ENCODE measurements at regions of chr2 and their contacts with region 1.

Region 1: DNA sequence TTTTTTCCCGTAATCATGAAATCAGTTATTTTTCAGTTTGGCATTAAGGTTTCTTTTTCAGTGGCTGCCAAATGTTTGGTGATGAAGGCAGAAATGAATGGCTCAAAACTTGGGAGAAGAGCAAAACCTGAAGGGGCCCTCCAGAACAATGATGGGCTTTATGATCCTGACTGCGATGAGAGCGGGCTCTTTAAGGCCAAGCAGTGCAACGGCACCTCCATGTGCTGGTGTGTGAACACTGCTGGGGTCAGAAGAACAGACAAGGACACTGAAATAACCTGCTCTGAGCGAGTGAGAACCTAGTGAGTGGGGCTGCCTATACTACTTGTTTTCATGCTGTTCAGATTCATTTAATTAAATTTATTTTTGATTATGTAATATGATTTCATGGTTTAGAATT is 29.2 kb upstream of the MSH2 start:
- DNase-seq: peak; percentile 47
- H3K4me3 Mint-ChIP-seq: peak overlapping the region; percentile 29
- H3K27ac Mint-ChIP-seq: no peak overlapping the region
- H3K4me1 Mint-ChIP-seq: peaks cover 7% of the 10 kb centered on the region
- H3K27me3 Mint-ChIP-seq: no peaks in the 10 kb centered on the region
- CTCF ChIP-seq: no peak

Region 2: GRCh38 chr2:47334356-47335136 is 39.2 kb before region 1 on chr2:
- CTCF ChIA-PET with region 1: interaction called, 20 read pairs
- intact Hi-C with region 1: loop called (anchors 1 kb)
- DNase-seq: no peak
- H3K4me3 Mint-ChIP-seq: no peak overlapping the region
- H3K27ac Mint-ChIP-seq: no peak overlapping the region
- H3K4me1 Mint-ChIP-seq: peaks cover 15% of the 10 kb centered on the region
- H3K27me3 Mint-ChIP-seq: no peaks in the 10 kb centered on the region
- CTCF ChIP-seq: no peak

Region 3: GRCh38 chr2:47339745-47340541 is 33.8 kb before region 1 on chr2:
- CTCF ChIA-PET with region 1: interaction called, 20 read pairs
- intact Hi-C with region 1: loop called (anchors 1 kb)
- DNase-seq: peak; percentile 84
- H3K4me3 Mint-ChIP-seq: peak overlapping the region; percentile 55
- H3K27ac Mint-ChIP-seq: peak overlapping the region; percentile 94
- H3K4me1 Mint-ChIP-seq: peaks cover 49% of the 10 kb centered on the region
- H3K27me3 Mint-ChIP-seq: no peaks in the 10 kb centered on the region
- CTCF ChIP-seq: no peak

Region 4: GRCh38 chr2:47344890-47345589 is 28.7 kb before region 1 on chr2:
- CTCF ChIA-PET with region 1: interaction called, 7 read pairs
- intact Hi-C with region 1: loop called (anchors 1 kb)
- DNase-seq: peak; percentile 96
- H3K4me3 Mint-ChIP-seq: peak overlapping the region; percentile 81
- H3K27ac Mint-ChIP-seq: peak overlapping the region; percentile 84
- H3K4me1 Mint-ChIP-seq: peaks cover 58% of the 10 kb centered on the region
- H3K27me3 Mint-ChIP-seq: no peaks in the 10 kb centered on the region
- CTCF ChIP-seq: peak; percentile 15